PC-9 (cell line): ENCODE measurements at regions of chr6 and their contacts with region 1.

Region 1: GRCh38 chr6:116223355-116223754 is 30.5 kb downstream of the TSPYL4 start:
- DNase-seq: no peak
- H3K4me3 ChIP-seq: no peak overlapping the region
- H3K27ac ChIP-seq: no peak overlapping the region
- H3K4me1 ChIP-seq: no peaks in the 10 kb centered on the region
- H3K27me3 ChIP-seq: no peaks in the 10 kb centered on the region
- CTCF ChIP-seq: no peak

Region 2: DNA sequence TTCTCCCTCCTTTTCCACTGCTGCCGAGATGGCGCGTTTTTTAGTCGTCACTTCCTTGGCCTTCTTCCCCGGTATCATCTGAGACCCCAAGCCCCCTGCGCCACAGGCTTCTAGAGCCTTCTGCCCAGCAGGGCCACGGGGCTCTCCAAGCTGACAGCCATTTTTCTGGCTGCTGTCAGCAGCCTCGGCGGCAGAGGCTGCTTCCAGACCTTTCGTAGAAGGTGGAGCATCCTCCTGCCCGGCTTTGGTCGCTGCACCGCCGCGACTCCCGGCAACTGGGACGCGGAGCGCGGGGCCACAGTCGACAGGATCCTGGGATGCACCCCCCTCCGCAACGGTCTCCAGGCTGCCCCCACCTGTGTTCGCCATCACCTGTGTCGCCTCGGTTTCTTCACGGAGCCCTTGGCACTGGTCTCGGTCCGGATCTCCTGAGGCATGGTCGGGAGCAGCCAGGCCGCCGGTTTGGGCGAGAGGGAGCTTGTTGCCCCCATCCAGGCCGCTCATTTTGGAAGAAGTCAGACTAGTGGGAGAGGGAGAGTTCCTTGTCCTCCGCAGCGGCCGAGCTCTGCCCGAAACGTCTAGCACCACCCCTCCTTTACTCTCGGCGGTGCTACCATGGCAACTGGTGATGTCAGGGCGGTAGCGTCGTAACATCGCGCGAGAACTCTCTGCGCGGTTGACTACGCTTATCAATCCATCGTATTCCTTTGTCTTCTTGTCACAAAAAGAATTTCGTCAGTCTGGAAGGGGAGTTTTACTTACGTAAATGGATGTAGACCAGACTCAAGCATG is 30.3 kb after region 1 on chr6 and contains the start of gene TSPYL4:
- CTCF ChIA-PET with region 1: interaction called, 18 read pairs
- POLR2A ChIA-PET with region 1: no interaction called
- intact Hi-C with region 1: no loop called
- DNase-seq: peak; percentile 87 to 95
- H3K4me3 ChIP-seq: peak within 1 kb of the TSS; percentile 82
- H3K27ac ChIP-seq: peak within 1 kb of the TSS; percentile 77
- H3K4me1 ChIP-seq: peaks cover 46% of the 10 kb centered on the region
- H3K27me3 ChIP-seq: no peaks in the 10 kb centered on the region
- CTCF ChIP-seq: no peak
- total RNA-seq, gene TSPYL4: 10.6 and 10.9 TPM in 2 replicates